ENCODE measurements at regions of chr1 and their contacts with region 1.

Region 1: DNA sequence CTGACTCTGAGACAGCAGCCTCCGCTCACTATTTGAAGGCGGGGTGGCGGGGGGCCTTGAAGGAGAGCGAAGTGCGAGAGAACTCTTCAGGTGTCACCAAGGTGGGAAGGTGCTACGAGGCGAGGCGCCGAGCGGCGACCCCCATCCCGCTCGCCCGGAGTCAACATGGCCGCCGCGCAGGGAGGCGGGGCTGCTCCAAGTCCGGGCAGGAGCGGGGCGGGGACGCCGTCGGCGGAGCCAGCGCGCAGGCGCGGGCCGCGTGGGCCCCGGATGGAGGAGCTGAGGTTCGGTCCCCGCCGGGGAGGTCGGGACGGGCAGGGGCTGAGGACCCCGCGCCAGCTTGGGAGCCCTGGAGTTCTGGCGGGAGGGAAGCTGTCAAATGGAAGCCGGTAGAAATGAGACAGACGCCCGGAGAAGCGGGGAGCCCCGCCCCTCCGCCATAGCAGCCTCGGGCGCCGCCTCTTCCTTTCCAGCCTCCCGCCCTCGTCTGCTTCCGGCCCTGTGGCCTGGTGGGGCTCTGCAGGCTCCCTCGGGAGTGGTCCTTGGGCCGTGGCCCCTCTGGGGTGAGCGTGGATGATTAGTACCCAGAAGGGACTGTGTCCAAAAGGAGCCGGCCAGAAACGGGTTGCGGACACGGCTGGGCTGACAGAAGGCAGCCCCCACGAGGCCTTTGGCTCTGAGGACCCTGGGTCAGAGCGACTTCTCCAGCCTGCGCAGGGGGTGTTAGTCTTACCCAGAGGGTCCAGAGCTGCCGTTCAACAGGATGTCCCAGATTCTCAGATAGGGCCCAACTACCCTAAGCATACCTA is at the start of gene PIGV:
- DNase-seq: peak; percentile 93
- CTCF ChIP-seq: no peak

Region 2: DNA sequence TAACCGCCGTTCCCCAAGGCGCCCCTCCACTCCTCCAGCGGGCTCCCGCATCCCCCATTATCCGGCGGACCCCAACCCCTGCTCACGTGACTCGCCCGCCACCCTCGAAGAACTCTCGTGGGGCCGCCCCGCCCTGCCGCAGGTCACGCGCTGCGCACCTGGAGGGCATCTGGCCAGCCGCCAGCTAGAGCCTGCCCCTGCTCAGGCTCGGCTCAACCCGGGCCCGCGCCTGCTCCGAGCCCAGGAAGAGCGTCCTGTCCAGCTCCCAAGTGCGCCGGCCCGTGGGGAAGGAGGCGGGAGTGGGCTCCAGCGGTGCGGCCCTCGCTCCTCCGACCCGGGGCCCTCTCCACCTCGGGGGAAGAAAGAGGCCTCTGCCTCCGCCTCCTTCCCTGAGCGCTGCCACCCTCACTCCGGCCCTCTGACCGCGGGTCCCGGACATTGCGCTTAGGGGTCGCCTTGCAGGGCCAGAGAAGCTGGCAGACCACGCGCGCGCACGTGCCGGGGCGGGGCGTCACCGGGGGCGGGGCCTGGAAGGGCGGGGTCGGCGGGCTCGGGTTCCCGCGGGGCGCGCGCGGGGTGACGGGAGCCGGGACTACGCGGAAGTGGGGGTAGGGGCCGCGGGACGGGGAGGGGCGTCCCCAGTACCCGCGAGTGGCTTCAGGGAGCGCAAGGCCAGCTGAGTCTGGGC is 287.3 kb before region 1 on chr1:
- CTCF ChIA-PET with region 1: interaction called, 24 read pairs
- POLR2A ChIA-PET with region 1: interaction called, 3 read pairs
- DNase-seq: peak; percentile 96
- CTCF ChIP-seq: no peak

Region 3: DNA sequence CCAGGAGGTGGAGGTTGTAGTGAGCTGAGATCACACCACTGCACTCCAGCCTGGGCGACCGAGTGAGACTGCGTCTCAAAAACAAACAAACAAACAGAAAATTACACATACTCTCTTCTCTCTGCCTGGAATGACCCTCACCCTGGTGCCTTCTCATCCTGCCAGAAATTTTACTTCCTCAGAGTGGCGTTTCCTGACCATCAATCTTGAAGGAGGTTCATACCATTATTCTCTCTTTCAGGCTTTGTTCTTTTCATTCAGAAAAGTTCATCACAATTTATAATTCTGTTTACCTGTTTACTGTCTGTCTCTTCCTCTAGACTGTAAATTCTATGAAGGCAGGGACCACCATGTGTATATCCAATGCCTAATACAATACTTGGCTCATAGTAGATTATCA is 179.0 kb before region 1 on chr1:
- CTCF ChIA-PET with region 1: interaction called, 257 read pairs
- POLR2A ChIA-PET with region 1: no interaction called
- DNase-seq: no peak
- CTCF ChIP-seq: peak; percentile 21

Region 4: GRCh38 chr1:26695356-26696118 is 92.4 kb before region 1 on chr1 and contains the start of gene ARID1A:
- CTCF ChIA-PET with region 1: interaction called, 35 read pairs
- POLR2A ChIA-PET with region 1: interaction called, 3 read pairs
- DNase-seq: peak; percentile 86
- CTCF ChIP-seq: no peak

Region 5: DNA sequence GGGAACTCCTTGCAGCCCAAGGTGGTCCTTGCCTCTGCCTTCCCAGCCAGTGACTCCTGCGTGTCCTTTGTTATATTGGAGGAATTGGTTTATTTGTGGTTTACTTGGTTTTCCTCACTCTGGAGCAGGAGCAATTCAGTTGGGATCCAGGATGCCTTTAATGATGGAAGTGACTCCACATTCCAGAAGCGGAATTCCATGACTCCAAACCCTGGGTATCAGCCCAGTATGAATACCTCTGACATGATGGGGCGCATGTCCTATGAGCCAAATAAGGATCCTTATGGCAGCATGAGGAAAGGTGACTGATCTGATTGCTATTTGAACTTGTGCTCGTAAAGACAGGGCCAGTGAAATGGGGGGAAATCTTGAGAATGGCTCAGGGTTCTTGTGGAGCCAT is 15.2 kb before region 1 on chr1:
- CTCF ChIA-PET with region 1: interaction called, 28 read pairs
- POLR2A ChIA-PET with region 1: no interaction called
- DNase-seq: no peak
- CTCF ChIP-seq: no peak

Region 6: GRCh38 chr1:26820784-26821269 is 32.9 kb after region 1 on chr1:
- CTCF ChIA-PET with region 1: interaction called, 10 read pairs
- POLR2A ChIA-PET with region 1: no interaction called
- DNase-seq: peak; percentile 80
- CTCF ChIP-seq: peak; percentile 52

Region 7: DNA sequence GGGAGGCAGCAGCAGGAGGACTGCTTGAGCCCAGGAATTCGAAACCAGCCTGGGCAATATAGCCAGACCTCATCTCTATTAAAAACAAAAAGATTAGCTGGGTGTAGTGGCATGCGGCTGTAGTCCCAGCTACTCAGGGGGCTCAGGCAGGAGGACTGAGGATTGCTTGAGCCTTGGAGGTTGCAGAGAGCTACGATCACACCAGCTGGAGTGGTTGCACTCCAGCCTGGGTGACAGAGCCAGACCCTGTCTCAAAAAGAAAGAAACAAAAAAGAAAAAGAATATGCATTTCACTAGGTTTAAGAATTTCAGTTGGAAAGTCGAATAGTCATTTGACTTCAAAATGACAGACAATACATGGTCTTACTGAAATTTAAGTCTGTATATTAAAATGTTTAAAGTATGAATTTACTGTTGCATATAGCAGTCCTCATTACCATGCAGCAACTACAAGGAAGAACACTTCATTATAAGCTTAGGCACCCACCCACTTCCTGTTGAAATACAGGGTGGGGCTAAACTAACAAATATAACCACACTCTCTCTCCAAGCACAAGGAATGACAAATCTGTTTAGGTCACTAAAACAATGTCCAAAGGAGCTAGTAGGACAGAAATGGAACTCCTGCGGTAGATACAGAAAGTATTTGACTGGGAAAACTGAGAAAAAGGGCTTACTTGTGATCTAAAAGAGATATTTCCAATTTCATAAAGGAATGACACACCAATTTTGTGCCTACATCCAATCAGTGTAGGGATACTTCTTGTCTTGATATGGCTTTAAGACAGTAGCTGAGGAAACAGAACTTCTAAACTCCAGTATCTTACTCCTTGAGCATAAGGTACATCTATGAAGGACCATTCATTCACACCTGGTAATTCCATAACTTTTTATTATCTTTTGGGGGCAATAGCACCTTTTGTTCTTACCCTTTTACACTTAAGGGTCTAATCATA is 648.6 kb after region 1 on chr1:
- CTCF ChIA-PET with region 1: no interaction called
- POLR2A ChIA-PET with region 1: no interaction called
- DNase-seq: no peak
- CTCF ChIP-seq: no peak

Measured in GM10248 (cell line).